Caco-2 (cell line): ENCODE measurements at regions of chr3 and their contacts with region 1.

Region 1: DNA sequence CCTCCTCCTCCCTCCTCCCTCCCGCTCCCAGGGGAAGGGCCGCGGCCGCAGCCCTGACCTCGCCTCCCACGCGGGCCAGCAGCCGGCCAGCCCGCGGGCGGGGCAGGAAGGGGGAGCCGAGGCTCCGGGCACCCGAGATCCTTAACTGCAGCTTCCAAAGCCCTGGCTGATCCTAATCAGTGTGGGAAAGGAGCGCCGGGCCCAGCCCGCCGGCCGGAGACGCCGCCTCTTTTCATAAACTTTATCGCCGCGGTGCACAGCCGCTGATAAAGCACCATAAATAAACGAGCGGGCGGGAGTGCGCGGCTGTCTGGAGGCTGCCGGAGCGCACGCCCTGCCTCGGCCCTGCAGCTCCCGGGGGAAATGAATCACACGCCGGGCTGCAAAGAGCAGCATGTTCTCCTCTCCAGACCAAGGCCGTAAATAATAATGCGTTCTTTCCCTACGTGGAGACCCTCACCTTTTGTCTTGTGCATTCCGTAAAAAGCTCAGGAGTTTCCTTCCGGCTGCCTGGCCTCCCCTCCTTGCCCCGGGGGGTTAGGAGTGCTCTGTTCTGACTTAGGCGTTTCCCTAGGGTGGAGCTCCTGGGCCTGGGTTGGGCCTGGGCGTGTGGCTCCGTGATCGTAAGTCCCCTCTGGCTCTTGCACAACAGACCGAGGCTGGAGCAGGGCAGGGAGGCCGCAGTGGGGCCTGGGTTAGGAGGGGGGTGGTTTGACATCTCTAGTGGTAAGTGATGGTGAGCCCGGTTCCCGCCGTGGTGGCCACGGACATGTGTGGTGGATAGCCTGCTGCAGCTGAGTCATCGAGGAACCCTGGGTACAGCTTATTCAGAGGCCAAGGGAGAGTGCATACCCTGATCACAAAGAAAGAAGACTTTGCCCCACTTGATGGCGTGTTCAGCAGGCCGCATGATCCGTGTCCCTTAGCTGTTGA is 132.6 kb upstream of the HES1 start:
- DNase-seq: peak; percentile 87 to 94
- H3K4me3 ChIP-seq: peak overlapping the region; percentile 35
- H3K4me3 Mint-ChIP-seq: peak overlapping the region; percentile 76
- H3K27ac Mint-ChIP-seq: peak overlapping the region; percentile 81
- H3K4me1 ChIP-seq: peaks cover 42% of the 10 kb centered on the region
- H3K4me1 Mint-ChIP-seq: peaks cover 29% of the 10 kb centered on the region
- H3K27me3 ChIP-seq: no peaks in the 10 kb centered on the region
- H3K27me3 Mint-ChIP-seq: no peaks in the 10 kb centered on the region
- CTCF ChIP-seq: no peak

Region 2: DNA sequence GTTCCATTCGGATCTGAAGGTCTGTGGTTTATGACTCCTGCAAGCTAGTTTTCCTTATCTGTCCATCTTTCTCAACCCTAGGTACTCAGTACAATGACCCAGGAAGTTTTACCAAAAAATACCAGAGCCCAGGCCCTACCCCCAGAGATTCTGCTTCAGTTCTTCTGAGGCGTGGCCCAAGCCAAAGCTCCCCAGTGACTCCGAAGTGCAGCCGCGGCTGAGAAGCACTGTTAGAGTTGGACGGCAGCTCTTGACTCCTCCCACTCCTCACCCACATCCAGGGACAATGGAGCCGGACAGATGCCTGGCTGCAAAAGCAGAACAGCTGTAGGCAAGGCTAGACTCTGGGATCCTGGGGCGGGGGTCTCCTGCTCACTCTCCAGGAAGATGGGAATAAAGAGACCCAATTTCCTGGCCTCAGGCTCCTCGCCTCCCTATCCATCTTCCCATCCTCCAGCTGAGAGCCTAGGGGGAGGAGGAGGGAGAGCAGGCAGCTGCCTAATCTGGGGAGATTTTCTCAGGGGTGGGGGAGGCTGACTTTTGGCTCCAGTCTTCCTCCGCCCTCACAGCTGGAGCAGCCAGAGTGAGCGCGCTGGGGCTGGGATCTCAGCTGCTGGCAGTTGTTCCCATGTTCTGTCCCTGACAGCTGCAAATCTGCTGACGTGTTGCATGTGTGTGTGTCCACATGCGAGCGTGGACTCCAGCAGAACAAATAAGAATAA is 186.6 kb before region 1 on chr3:
- CTCF ChIA-PET with region 1: no interaction called
- POLR2A ChIA-PET with region 1: interaction called, 3 read pairs
- intact Hi-C with region 1: loop called (anchors 1 kb)
- DNase-seq: peak; percentile 83 to 88
- H3K4me3 ChIP-seq: peak overlapping the region; percentile 9
- H3K4me3 Mint-ChIP-seq: peak overlapping the region; percentile 46
- H3K27ac Mint-ChIP-seq: peak overlapping the region; percentile 45
- H3K4me1 ChIP-seq: peaks cover 54% of the 10 kb centered on the region
- H3K4me1 Mint-ChIP-seq: peaks cover 43% of the 10 kb centered on the region
- H3K27me3 ChIP-seq: no peaks in the 10 kb centered on the region
- H3K27me3 Mint-ChIP-seq: no peaks in the 10 kb centered on the region
- CTCF ChIP-seq: no peak

Region 3: GRCh38 chr3:193842029-193842798 is 161.2 kb before region 1 on chr3:
- CTCF ChIA-PET with region 1: interaction called, 3 read pairs
- POLR2A ChIA-PET with region 1: interaction called, 3 read pairs
- intact Hi-C with region 1: loop called (anchors 5 kb)
- DNase-seq: peak in 1 of 2 experiments; percentile 48
- H3K4me3 ChIP-seq: peak overlapping the region; percentile 37
- H3K4me3 Mint-ChIP-seq: peak overlapping the region; percentile 73
- H3K27ac Mint-ChIP-seq: peak overlapping the region; percentile 92
- H3K4me1 ChIP-seq: peaks cover 77% of the 10 kb centered on the region
- H3K4me1 Mint-ChIP-seq: peaks cover 50% of the 10 kb centered on the region
- H3K27me3 ChIP-seq: no peaks in the 10 kb centered on the region
- H3K27me3 Mint-ChIP-seq: no peaks in the 10 kb centered on the region
- CTCF ChIP-seq: no peak

Region 4: DNA sequence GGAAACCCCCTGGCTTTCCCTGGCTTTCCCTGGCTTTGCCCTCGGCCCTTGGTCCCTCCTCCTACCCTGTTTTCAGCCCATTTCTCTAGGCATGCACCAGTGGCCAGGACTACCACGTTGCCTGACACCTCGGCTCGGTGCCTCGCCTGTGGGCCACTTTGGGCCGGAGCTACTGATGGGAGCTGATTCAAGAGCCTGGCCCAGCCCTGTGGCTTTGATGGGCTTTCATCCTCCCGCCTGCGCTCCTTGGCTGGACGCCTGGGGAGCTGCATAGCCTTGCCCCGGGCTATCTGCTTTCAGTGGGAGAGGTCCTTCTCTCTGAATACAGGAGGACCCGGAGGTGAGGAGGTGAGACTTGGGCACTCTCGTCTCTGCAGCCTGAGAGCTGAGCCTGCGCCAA is 60.2 kb before region 1 on chr3:
- CTCF ChIA-PET with region 1: no interaction called
- POLR2A ChIA-PET with region 1: no interaction called
- intact Hi-C with region 1: no loop called
- DNase-seq: peak in 1 of 2 experiments; percentile 57
- H3K4me3 ChIP-seq: no peak overlapping the region
- H3K4me3 Mint-ChIP-seq: no peak overlapping the region
- H3K27ac Mint-ChIP-seq: no peak overlapping the region
- H3K4me1 ChIP-seq: peaks cover 22% of the 10 kb centered on the region
- H3K4me1 Mint-ChIP-seq: peaks cover 23% of the 10 kb centered on the region
- H3K27me3 ChIP-seq: no peaks in the 10 kb centered on the region
- H3K27me3 Mint-ChIP-seq: no peaks in the 10 kb centered on the region
- CTCF ChIP-seq: no peak

Region 5: GRCh38 chr3:193971261-193971751 is 32.1 kb before region 1 on chr3:
- CTCF ChIA-PET with region 1: interaction called, 4 read pairs
- POLR2A ChIA-PET with region 1: no interaction called
- intact Hi-C with region 1: loop called (anchors 2 kb)
- DNase-seq: no peak
- H3K4me3 ChIP-seq: no peak overlapping the region
- H3K4me3 Mint-ChIP-seq: no peak overlapping the region
- H3K27ac Mint-ChIP-seq: no peak overlapping the region
- H3K4me1 ChIP-seq: peaks cover 28% of the 10 kb centered on the region
- H3K4me1 Mint-ChIP-seq: peaks cover 33% of the 10 kb centered on the region
- H3K27me3 ChIP-seq: no peaks in the 10 kb centered on the region
- H3K27me3 Mint-ChIP-seq: no peaks in the 10 kb centered on the region
- CTCF ChIP-seq: no peak

Region 6: GRCh38 chr3:194023501-194024280 is 20.3 kb after region 1 on chr3:
- CTCF ChIA-PET with region 1: no interaction called
- POLR2A ChIA-PET with region 1: no interaction called
- intact Hi-C with region 1: no loop called
- DNase-seq: no peak
- H3K4me3 ChIP-seq: no peak overlapping the region
- H3K4me3 Mint-ChIP-seq: no peak overlapping the region
- H3K27ac Mint-ChIP-seq: peak overlapping the region; percentile 12
- H3K4me1 ChIP-seq: peaks cover 14% of the 10 kb centered on the region
- H3K4me1 Mint-ChIP-seq: peaks cover 23% of the 10 kb centered on the region
- H3K27me3 ChIP-seq: no peaks in the 10 kb centered on the region
- H3K27me3 Mint-ChIP-seq: no peaks in the 10 kb centered on the region
- CTCF ChIP-seq: no peak

Region 7: DNA sequence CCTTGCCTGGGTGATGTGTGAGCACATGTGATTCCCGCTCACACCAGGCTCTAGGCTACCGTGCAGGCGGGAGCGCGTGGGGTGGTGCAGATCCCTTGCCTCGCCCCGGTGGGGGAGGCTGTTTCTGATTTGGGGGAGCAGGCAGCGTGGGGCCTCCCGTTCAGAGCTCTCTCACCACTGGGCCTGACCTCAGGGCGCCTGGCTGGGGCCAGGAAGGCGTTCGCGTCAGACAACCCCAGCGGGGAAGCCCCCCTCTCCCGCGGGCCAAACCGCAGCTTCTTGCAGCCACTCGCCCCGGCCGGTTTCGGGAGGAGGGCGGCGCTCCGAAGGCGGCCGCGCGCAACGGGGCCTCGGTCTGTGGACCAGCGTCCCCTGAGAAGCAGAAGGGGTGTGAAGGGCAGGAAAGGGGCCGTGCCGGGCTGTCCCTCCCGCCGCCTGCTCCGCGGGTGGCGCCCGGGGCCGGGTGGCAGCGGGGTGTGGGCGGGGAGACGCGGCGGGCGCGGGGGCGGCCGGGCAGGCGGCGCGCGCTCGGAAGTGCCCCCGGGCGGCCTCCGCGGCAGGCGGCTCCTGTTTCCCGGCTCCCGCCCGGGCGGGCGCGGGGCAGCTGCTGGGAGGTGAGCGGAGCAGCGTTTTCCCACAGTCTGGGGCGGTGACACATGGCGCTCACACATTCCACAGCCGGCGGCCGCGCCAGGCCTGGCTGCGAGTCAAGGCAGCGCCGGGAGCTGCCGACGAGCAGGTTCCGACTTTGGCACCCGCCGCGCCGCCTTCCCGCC is 67.4 kb after region 1 on chr3:
- CTCF ChIA-PET with region 1: no interaction called
- POLR2A ChIA-PET with region 1: interaction called, 5 read pairs
- intact Hi-C with region 1: loop called (anchors 2 kb)
- DNase-seq: peak; percentile 87 to 89
- H3K4me3 ChIP-seq: peak overlapping the region; percentile 52
- H3K4me3 Mint-ChIP-seq: peak overlapping the region; percentile 88
- H3K27ac Mint-ChIP-seq: peak overlapping the region; percentile 94
- H3K4me1 ChIP-seq: peaks cover 44% of the 10 kb centered on the region
- H3K4me1 Mint-ChIP-seq: peaks cover 33% of the 10 kb centered on the region
- H3K27me3 ChIP-seq: no peaks in the 10 kb centered on the region
- H3K27me3 Mint-ChIP-seq: no peaks in the 10 kb centered on the region
- CTCF ChIP-seq: no peak

Region 8: GRCh38 chr3:194121891-194122631 is 118.7 kb after region 1 on chr3:
- CTCF ChIA-PET with region 1: no interaction called
- POLR2A ChIA-PET with region 1: interaction called, 5 read pairs
- intact Hi-C with region 1: loop called (anchors 1 kb)
- DNase-seq: peak; percentile 70 to 72
- H3K4me3 ChIP-seq: no peak overlapping the region
- H3K4me3 Mint-ChIP-seq: peak overlapping the region; percentile 56
- H3K27ac Mint-ChIP-seq: peak overlapping the region; percentile 89
- H3K4me1 ChIP-seq: peaks cover 82% of the 10 kb centered on the region
- H3K4me1 Mint-ChIP-seq: peaks cover 72% of the 10 kb centered on the region
- H3K27me3 ChIP-seq: no peaks in the 10 kb centered on the region
- H3K27me3 Mint-ChIP-seq: no peaks in the 10 kb centered on the region
- CTCF ChIP-seq: no peak

Region 9: DNA sequence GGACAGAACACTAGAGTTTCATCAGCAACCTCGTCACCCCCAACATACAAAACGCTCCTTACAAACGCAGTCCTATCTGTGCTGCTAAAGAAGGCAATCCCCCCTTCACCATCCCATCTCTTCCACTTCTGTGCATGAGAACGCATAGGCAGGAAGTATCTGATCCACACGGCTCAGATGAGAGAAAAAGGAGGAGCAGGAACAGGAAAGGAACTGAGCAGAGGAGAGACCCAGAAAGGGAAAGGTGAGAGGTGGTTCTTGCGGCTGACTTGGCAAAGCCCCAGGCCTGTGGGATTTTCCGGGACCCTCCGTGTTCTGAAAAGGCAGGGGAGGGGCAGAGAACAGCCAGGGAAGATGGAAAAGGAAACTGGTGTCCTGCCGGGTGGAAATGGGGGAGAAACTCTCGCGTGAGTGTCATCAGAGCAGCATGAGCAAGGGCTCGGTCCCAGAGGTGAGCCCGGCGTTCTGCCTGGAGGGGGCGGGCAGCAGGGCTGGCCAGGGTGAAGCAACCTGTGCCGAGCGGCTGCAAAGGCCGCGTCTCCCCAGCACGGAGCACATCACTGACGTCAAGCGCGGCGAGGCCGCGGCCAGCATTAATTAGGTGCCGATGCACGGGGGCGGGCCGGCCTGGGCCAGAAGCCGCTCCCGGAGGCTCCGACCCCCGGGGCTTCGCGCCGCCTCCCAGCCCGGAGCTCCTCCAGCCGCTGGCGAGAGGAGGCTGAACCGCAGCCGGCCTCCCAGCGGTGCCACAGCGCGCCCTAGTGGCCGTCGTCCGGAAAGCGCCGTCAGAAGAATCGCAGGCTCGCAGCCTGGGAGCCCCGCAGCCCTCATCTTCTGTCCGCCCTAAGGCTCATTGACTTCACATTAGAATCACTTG is 311.9 kb after region 1 on chr3:
- CTCF ChIA-PET with region 1: interaction called, 6 read pairs
- POLR2A ChIA-PET with region 1: no interaction called
- intact Hi-C with region 1: loop called (anchors 1 kb)
- DNase-seq: peak; percentile 92 to 95
- H3K4me3 ChIP-seq: peak overlapping the region; percentile 51
- H3K4me3 Mint-ChIP-seq: peak overlapping the region; percentile 85
- H3K27ac Mint-ChIP-seq: peak overlapping the region; percentile 93
- H3K4me1 ChIP-seq: peaks cover 41% of the 10 kb centered on the region
- H3K4me1 Mint-ChIP-seq: peaks cover 49% of the 10 kb centered on the region
- H3K27me3 ChIP-seq: no peaks in the 10 kb centered on the region
- H3K27me3 Mint-ChIP-seq: no peaks in the 10 kb centered on the region
- CTCF ChIP-seq: peak; percentile 87 to 95